Caco-2 (cell line): ENCODE measurements at regions of chr12 and their contacts with region 1.

Region 1: DNA sequence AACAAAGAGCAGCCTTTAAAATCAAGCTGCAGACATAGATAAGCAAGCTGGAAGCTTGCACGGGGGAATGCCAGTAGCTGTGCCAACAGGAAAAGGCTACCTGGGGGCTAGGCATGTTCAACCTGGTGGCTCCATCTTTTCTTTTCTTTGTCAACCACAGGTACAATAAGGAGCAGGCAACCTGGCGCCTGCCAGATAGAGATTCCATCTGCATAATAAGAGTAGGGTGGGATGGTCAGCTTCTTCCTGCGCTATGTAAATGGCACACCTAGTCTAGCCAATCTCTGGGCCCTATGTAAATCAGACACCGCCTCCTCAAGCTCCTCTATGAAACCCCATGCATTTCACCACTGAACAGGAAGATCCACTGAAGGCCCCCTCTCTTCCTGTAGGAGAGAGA is 87.4 kb upstream of the PKP2 start:
- DNase-seq: peak; percentile 55 to 67
- H3K4me3 ChIP-seq: no peak overlapping the region
- H3K4me3 Mint-ChIP-seq: peak overlapping the region; percentile 2
- H3K27ac Mint-ChIP-seq: peak overlapping the region; percentile 29
- H3K4me1 ChIP-seq: peaks cover 57% of the 10 kb centered on the region
- H3K4me1 Mint-ChIP-seq: peaks cover 53% of the 10 kb centered on the region
- H3K27me3 ChIP-seq: no peaks in the 10 kb centered on the region
- H3K27me3 Mint-ChIP-seq: no peaks in the 10 kb centered on the region
- CTCF ChIP-seq: no peak

Region 2: DNA sequence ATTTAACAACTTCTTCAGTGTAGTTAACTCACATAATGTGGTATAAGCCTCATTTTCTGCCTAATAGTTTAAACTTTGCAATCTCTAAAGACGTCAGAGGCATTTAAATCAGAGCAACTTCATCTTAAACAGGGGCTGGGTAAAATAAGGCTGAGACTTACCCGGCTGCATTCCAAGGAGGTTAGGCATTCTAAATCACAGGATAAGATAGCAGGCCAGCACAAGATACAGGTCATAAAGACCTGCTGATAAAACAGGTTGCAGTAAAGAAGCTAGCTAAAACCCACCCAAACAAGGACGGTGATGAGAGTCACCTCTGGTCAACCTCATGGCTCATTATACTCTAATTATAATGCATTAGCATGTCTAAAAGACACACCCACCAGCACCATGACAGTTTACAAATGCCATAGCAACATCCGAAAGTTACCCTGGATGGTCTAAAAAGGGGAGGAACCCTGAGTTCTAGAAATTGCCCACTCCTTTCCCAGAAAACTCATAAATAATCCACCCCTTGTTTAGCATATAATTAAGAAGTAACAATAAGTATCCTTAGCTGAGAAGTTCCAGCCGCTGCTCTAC is 28.3 kb after region 1 on chr12:
- CTCF ChIA-PET with region 1: no interaction called
- POLR2A ChIA-PET with region 1: no interaction called
- intact Hi-C with region 1: loop called (anchors 1 kb)
- DNase-seq: peak; percentile 73 to 85
- H3K4me3 ChIP-seq: no peak overlapping the region
- H3K4me3 Mint-ChIP-seq: peak overlapping the region; percentile 48
- H3K27ac Mint-ChIP-seq: peak overlapping the region; percentile 53
- H3K4me1 ChIP-seq: peaks cover 27% of the 10 kb centered on the region
- H3K4me1 Mint-ChIP-seq: peaks cover 17% of the 10 kb centered on the region
- H3K27me3 ChIP-seq: no peaks in the 10 kb centered on the region
- H3K27me3 Mint-ChIP-seq: no peaks in the 10 kb centered on the region
- CTCF ChIP-seq: no peak

Region 3: GRCh38 chr12:33187435-33187834 is 203.5 kb after region 1 on chr12:
- CTCF ChIA-PET with region 1: no interaction called
- POLR2A ChIA-PET with region 1: no interaction called
- intact Hi-C with region 1: no loop called
- DNase-seq: no peak
- H3K4me3 ChIP-seq: no peak overlapping the region
- H3K4me3 Mint-ChIP-seq: no peak overlapping the region
- H3K27ac Mint-ChIP-seq: no peak overlapping the region
- H3K4me1 ChIP-seq: peaks cover 10% of the 10 kb centered on the region
- H3K4me1 Mint-ChIP-seq: peaks cover 18% of the 10 kb centered on the region
- H3K27me3 ChIP-seq: no peaks in the 10 kb centered on the region
- H3K27me3 Mint-ChIP-seq: no peaks in the 10 kb centered on the region
- CTCF ChIP-seq: no peak

Region 4: DNA sequence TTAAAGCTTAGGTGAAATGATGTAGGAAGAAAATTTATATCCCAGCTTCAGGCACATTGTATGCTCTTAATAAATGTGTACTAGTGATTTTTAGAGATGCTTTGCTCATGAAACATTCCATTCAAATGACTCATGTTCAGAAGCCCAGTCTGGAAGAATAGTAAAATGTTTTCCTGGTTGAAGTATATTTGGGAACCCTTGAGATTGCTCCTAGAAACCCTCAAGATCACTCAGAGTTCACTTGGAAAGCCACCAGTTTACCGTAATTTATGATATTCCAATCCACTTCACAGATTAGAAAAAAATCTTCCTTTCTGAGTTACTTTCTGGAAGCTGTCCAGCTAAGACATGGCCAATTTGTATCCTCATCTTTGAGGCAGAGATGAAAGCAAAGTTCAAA is 269.2 kb after region 1 on chr12:
- CTCF ChIA-PET with region 1: no interaction called
- POLR2A ChIA-PET with region 1: no interaction called
- intact Hi-C with region 1: loop called (anchors 10 kb)
- DNase-seq: no peak
- H3K4me3 ChIP-seq: no peak overlapping the region
- H3K4me3 Mint-ChIP-seq: no peak overlapping the region
- H3K27ac Mint-ChIP-seq: no peak overlapping the region
- H3K4me1 ChIP-seq: peaks cover 30% of the 10 kb centered on the region
- H3K4me1 Mint-ChIP-seq: peaks cover 13% of the 10 kb centered on the region
- H3K27me3 ChIP-seq: no peaks in the 10 kb centered on the region
- H3K27me3 Mint-ChIP-seq: no peaks in the 10 kb centered on the region
- CTCF ChIP-seq: no peak

Region 5: GRCh38 chr12:33310471-33310870 is 326.5 kb after region 1 on chr12:
- CTCF ChIA-PET with region 1: no interaction called
- POLR2A ChIA-PET with region 1: no interaction called
- intact Hi-C with region 1: loop called (anchors 10 kb)
- DNase-seq: no peak
- H3K4me3 ChIP-seq: no peak overlapping the region
- H3K4me3 Mint-ChIP-seq: no peak overlapping the region
- H3K27ac Mint-ChIP-seq: no peak overlapping the region
- H3K4me1 ChIP-seq: peaks cover 29% of the 10 kb centered on the region
- H3K4me1 Mint-ChIP-seq: peaks cover 40% of the 10 kb centered on the region
- H3K27me3 ChIP-seq: no peaks in the 10 kb centered on the region
- H3K27me3 Mint-ChIP-seq: no peaks in the 10 kb centered on the region
- CTCF ChIP-seq: no peak